GM12878 (cell line): ENCODE measurements at regions of chr9 and their contacts with region 1.

Region 1: DNA sequence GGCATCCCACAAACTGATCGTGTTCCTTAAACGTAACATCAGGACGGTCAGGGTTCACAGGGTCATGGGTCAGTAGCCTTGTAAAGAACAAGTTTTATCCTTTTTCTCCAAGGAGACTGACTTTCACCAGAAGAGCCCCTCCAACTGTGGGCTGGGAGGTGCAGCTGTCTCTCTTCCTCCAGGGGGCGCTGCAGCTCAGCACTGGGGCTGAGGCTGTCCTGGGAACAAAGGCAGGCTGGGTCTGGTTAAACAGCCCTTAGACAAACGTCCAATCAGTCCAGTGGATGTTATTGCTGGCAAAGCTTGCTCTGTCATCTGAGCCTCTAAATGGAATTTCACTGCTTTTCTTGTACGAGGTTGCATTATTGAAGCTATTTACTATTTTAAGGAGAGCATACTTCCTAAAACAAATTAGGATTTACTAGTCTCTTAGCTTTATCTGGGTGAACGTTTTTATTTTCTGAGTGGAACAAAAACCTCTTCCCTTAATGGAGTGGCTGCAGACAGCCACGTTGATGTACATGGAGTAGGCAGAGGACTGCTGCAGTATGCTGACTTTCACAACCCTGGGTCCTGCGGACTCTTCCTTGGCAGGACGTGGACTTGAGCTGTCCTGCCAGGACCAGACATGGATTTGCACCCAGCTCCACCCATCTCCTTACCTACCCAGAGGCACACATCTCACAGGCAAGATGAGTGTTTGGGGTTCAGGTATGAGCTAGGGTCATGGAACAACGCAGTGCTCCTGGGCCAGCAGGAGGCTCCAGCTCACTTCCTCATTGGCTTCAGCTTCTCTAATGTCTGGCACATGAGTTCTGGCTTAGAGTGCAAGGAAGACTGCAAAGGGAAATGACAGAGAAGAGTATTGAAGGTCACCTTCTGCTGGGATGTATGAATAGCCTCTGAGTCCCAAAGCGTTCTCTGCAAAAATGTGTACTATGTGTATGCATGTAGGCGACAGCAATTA is 7.8 kb downstream of the EXOSC2 start:
- DNase-seq: no peak
- ATAC-seq: peak; percentile 95
- H3K4me3 ChIP-seq: no peak overlapping the region
- H3K27ac ChIP-seq: no peak overlapping the region
- H3K4me1 ChIP-seq: peaks cover 19% of the 10 kb centered on the region
- H3K27me3 ChIP-seq: no peaks in the 10 kb centered on the region
- CTCF ChIP-seq: peak; percentile 73 to 88 (median 87)
- EP300 ChIP-seq: no peak
- POLR2A ChIP-seq: peak; percentile 32
- RAD21 ChIP-seq: peak; percentile 64

Region 2: GRCh38 chr9:130660683-130661450 is 40.5 kb before region 1 on chr9:
- CTCF ChIA-PET with region 1: no interaction called
- POLR2A ChIA-PET with region 1: no interaction called
- RAD21 ChIA-PET with region 1: no interaction called
- SMC1A ChIA-PET with region 1: no interaction called
- in situ Hi-C with region 1: no loop called
- intact Hi-C with region 1: no loop called
- DNase-seq: no peak
- ATAC-seq: no peak
- H3K4me3 ChIP-seq: no peak overlapping the region
- H3K27ac ChIP-seq: no peak overlapping the region
- H3K4me1 ChIP-seq: no peaks in the 10 kb centered on the region
- H3K27me3 ChIP-seq: peaks cover 14 to 25% of the 10 kb centered on the region in 2 experiments
- CTCF ChIP-seq: no peak
- EP300 ChIP-seq: no peak
- POLR2A ChIP-seq: no peak
- RAD21 ChIP-seq: no peak

Region 3: DNA sequence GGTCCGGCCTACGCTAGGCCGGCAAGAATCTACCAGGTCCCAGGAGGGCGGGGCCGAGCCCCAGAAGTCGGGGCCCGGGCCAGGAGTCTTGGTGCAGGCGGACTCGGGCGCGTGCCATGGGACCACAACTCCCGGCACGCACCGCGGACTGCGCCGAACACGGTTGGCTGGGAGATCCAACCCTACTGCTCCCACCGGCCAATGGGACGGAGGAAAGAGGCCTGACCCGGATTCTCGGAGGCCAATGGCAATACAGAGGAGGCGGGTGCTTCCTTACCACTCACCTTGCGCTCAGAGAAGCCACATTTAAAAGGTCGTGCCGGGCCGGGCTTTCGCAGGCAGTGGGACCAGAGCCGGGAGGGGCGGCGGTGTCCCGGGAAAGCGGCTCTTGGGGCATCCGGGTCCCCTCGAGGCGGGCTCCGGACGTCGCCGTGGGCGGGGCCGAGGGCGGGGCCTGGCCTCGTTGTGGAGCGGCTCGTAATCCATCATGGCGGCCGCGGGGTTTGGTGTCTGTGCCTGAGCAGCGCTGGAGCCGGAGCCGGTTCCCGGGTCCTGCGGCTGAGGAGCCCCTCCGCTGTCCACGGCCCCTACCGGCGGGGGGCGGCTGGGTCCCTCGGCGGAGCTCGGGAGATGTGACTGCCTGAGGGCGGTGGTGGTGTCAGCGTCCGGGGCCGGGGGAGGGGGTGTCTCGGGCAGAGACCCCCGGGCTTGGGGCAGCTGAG is 11.4 kb after region 1 on chr9:
- CTCF ChIA-PET with region 1: interaction called, 47 read pairs
- POLR2A ChIA-PET with region 1: interaction called, 8 read pairs
- RAD21 ChIA-PET with region 1: interaction called, 3 read pairs
- SMC1A ChIA-PET with region 1: interaction called, 7 read pairs
- in situ Hi-C with region 1: no loop called
- intact Hi-C with region 1: no loop called
- DNase-seq: peak; percentile 91
- ATAC-seq: peak; percentile 99
- H3K4me3 ChIP-seq: peak overlapping the region; percentile 98
- H3K27ac ChIP-seq: peak overlapping the region; percentile 96
- H3K4me1 ChIP-seq: no peaks in the 10 kb centered on the region
- H3K27me3 ChIP-seq: no peaks in the 10 kb centered on the region
- CTCF ChIP-seq: no peak
- EP300 ChIP-seq: no peak
- POLR2A ChIP-seq: peak; percentile 90
- RAD21 ChIP-seq: no peak

Region 4: DNA sequence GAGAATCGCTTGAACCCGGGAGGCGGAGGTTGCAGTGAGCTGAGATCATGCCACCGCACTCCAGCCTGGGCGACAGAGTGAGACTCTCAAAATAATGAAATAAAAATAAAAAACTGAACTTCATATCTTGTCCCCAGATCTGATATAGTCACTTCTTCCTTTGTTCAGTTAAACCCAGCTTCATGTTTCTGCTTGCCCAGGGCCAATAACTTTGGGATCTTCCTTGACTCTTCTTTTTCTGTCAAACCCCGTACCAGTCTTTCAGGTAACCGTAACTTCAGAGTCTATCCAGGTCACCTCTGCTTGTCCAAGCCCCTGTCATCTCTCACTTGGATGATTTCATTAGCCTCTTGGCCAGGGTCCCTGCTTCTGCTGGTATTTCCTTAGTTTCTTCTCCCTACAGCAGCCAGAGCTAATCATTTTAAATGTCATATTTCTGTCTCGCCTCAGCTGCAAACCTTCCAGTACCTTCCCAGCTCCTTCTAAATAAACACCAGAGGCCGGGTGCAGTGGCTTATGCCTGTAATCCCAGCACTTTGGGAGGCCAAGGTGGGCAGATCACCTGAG is 114.0 kb after region 1 on chr9:
- CTCF ChIA-PET with region 1: interaction called, 11 read pairs
- POLR2A ChIA-PET with region 1: no interaction called
- RAD21 ChIA-PET with region 1: no interaction called
- SMC1A ChIA-PET with region 1: no interaction called
- in situ Hi-C with region 1: no loop called
- intact Hi-C with region 1: no loop called
- DNase-seq: no peak
- ATAC-seq: no peak
- H3K4me3 ChIP-seq: no peak overlapping the region
- H3K27ac ChIP-seq: no peak overlapping the region
- H3K4me1 ChIP-seq: peaks cover 7% of the 10 kb centered on the region
- H3K27me3 ChIP-seq: no peaks in the 10 kb centered on the region
- CTCF ChIP-seq: no peak
- EP300 ChIP-seq: no peak
- POLR2A ChIP-seq: no peak
- RAD21 ChIP-seq: no peak

Region 5: DNA sequence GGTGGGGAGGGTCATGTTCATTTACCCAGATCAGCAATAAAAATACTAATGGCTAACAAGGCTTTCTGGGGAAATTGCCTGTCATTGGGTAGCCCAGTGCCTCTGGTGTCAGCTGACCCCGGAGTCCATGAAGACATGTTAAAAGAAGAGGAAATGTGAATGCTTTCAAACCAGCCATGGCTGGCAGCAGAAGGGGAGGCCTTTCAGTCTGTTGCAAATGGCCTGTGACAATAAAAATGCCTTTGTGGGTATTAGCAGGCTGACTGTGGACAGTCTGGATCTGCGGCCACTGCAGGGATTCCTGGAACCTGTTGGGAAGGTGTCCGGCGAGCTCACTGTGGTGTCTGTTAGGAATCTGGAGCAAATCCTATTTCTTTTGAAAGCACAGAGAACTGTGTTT is 141.2 kb after region 1 on chr9:
- CTCF ChIA-PET with region 1: interaction called, 13 read pairs
- POLR2A ChIA-PET with region 1: no interaction called
- RAD21 ChIA-PET with region 1: no interaction called
- SMC1A ChIA-PET with region 1: no interaction called
- in situ Hi-C with region 1: no loop called
- intact Hi-C with region 1: no loop called
- DNase-seq: no peak
- ATAC-seq: 0 out of 3 replicates have a peak, but pooled peaks have one; percentile 24
- H3K4me3 ChIP-seq: no peak overlapping the region
- H3K27ac ChIP-seq: no peak overlapping the region
- H3K4me1 ChIP-seq: no peaks in the 10 kb centered on the region; the same call in 1 of the 2 replicates
- H3K27me3 ChIP-seq: no peaks in the 10 kb centered on the region
- CTCF ChIP-seq: no peak
- EP300 ChIP-seq: no peak
- POLR2A ChIP-seq: no peak
- RAD21 ChIP-seq: no peak

Region 6: DNA sequence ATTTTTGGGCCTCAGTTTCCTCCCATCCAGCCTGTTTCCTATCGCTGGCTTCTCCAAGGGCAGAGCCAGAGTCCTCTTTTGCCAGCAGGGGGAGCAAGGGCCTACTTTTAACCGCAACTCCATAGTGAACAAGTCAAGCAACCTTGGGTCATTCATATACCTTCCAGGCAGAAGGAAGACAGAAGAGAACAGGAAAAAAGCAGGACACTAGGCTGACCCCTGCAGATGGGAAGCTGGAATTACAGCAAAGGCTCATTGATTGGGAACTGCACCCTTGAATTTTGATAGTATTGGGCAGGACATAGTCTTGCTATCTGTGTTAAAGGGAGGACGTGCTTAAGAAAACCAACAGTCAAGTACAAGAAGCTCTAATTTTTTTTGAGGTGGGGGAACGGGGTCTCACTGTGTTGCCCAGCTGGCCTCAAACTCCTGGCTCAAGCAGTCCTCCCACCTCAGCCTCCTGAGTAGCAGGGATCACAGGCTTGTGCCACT is 165.2 kb after region 1 on chr9:
- CTCF ChIA-PET with region 1: interaction called, 267 read pairs
- POLR2A ChIA-PET with region 1: no interaction called
- RAD21 ChIA-PET with region 1: interaction called, 15 read pairs
- SMC1A ChIA-PET with region 1: interaction called, 21 read pairs
- in situ Hi-C with region 1: loop called (anchors 5 kb)
- intact Hi-C with region 1: no loop called
- DNase-seq: peak; percentile 17
- ATAC-seq: peak; percentile 50
- H3K4me3 ChIP-seq: no peak overlapping the region
- H3K27ac ChIP-seq: no peak overlapping the region
- H3K4me1 ChIP-seq: peaks cover 19% of the 10 kb centered on the region
- H3K27me3 ChIP-seq: no peaks in the 10 kb centered on the region
- CTCF ChIP-seq: peak; percentile 67 to 79 (median 78)
- EP300 ChIP-seq: no peak
- POLR2A ChIP-seq: no peak
- RAD21 ChIP-seq: peak; percentile 57

Region 7: GRCh38 chr9:131046581-131047202 is 345.4 kb after region 1 on chr9:
- CTCF ChIA-PET with region 1: interaction called, 16 read pairs
- POLR2A ChIA-PET with region 1: no interaction called
- RAD21 ChIA-PET with region 1: interaction called, 7 read pairs
- SMC1A ChIA-PET with region 1: interaction called, 3 read pairs
- in situ Hi-C with region 1: loop called (anchors 5 kb)
- intact Hi-C with region 1: loop called (anchors 5 kb)
- DNase-seq: no peak
- ATAC-seq: peak; percentile 96
- H3K4me3 ChIP-seq: no peak overlapping the region
- H3K27ac ChIP-seq: no peak overlapping the region
- H3K4me1 ChIP-seq: peaks cover 13% of the 10 kb centered on the region
- H3K27me3 ChIP-seq: no peaks in the 10 kb centered on the region
- CTCF ChIP-seq: peak; percentile 92 to 95 (median 92)
- EP300 ChIP-seq: no peak
- POLR2A ChIP-seq: no peak
- RAD21 ChIP-seq: peak; percentile 94